Ascending aorta (tissue), 2 donors: ENCODE measurements at regions of chr10 and their contacts with region 1.

Region 1: GRCh38 chr10:58513188-58514110 is 777 bp downstream of the BICC1 start:
- DNase-seq: peak in 1 of 2 donors; percentile 73
- H3K4me3 ChIP-seq: peak overlapping the region; percentile 72 to 88
- H3K27ac ChIP-seq: peak overlapping the region; percentile 66 to 81
- H3K4me1 ChIP-seq: no peaks in the 10 kb centered on the region
- H3K27me3 ChIP-seq: no peaks in the 10 kb centered on the region
- CTCF ChIP-seq: no peak

Region 2: GRCh38 chr10:58414270-58415041 is 99.0 kb before region 1 on chr10:
- intact Hi-C with region 1: loop called (anchors 5 kb)
- DNase-seq: no peak
- H3K4me3 ChIP-seq: peak overlapping the region in 1 of 2 donors; percentile 10
- H3K27ac ChIP-seq: no peak overlapping the region
- H3K4me1 ChIP-seq: peaks cover 0 to 6% of the 10 kb centered on the region in 2 donors
- H3K27me3 ChIP-seq: no peaks in the 10 kb centered on the region
- CTCF ChIP-seq: peak in 2 of 3 experiments; percentile 52 to 63

Region 3: DNA sequence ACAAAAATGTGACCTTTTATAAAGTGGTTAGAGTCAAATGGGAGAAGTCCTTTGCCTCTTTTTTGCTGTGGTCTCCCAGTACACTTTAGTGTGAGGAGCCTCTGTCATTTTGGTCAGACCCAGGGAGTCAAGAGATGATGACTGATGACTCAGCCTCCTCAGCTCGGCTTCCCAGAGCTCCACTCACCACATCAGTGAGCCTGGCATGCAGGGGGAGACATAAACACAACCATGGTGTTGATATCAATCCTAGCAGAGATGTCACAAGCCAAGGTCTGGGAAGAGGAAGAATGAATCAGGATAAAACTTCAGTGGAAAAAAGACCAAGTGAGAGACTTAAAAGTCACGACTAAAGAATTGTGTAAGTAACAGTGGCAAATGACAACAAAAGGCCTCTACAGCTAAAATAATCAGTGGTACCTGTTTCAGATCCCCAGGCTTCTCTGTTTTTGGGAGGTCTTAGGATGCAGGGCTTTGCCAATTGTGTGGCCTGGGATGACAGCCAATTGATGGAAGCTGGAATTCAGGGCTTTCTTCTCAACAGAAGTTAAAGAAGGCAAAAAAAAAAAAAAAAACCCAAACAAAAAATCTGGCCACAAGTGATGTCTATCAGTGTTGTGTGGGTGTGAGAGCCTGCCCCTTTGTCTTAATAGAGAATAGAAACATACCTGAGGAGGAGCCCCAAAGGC is 78.0 kb before region 1 on chr10:
- intact Hi-C with region 1: loop called (anchors 5 kb)
- DNase-seq: peak; percentile 14 to 85
- H3K4me3 ChIP-seq: no peak overlapping the region
- H3K27ac ChIP-seq: no peak overlapping the region
- H3K4me1 ChIP-seq: peaks cover 0 to 15% of the 10 kb centered on the region in 2 donors
- H3K27me3 ChIP-seq: no peaks in the 10 kb centered on the region
- CTCF ChIP-seq: no peak

Region 4: GRCh38 chr10:58475322-58476277 is 37.8 kb before region 1 on chr10:
- intact Hi-C with region 1: loop called (anchors 5 kb)
- DNase-seq: no peak
- H3K4me3 ChIP-seq: peak overlapping the region; percentile 17 to 49
- H3K27ac ChIP-seq: peak overlapping the region; percentile 83 to 87
- H3K4me1 ChIP-seq: peaks cover 0 to 19% of the 10 kb centered on the region in 2 donors
- H3K27me3 ChIP-seq: no peaks in the 10 kb centered on the region
- CTCF ChIP-seq: no peak

Region 5: GRCh38 chr10:58577437-58577777 is 64.0 kb after region 1 on chr10:
- intact Hi-C with region 1: loop called (anchors 5 kb)
- DNase-seq: no peak
- H3K4me3 ChIP-seq: no peak overlapping the region
- H3K27ac ChIP-seq: peak overlapping the region; percentile 59 to 62
- H3K4me1 ChIP-seq: peaks cover 5 to 37% of the 10 kb centered on the region in 2 donors
- H3K27me3 ChIP-seq: no peaks in the 10 kb centered on the region
- CTCF ChIP-seq: no peak

Region 6: GRCh38 chr10:58701405-58702135 is 188.1 kb after region 1 on chr10:
- intact Hi-C with region 1: loop called (anchors 5 kb)
- DNase-seq: peak in 1 of 2 donors; percentile 69
- H3K4me3 ChIP-seq: no peak overlapping the region
- H3K27ac ChIP-seq: peak overlapping the region; percentile 51 to 67
- H3K4me1 ChIP-seq: peaks cover 0 to 28% of the 10 kb centered on the region in 2 donors
- H3K27me3 ChIP-seq: no peaks in the 10 kb centered on the region
- CTCF ChIP-seq: no peak